HEK293T (cell line): ENCODE measurements at regions of chr6 and their contacts with region 1.

Region 1: GRCh38 chr6:64330694-64331307 is 695.2 kb downstream of the PHF3 start:
- DNase-seq: peak; percentile 21

Region 2: DNA sequence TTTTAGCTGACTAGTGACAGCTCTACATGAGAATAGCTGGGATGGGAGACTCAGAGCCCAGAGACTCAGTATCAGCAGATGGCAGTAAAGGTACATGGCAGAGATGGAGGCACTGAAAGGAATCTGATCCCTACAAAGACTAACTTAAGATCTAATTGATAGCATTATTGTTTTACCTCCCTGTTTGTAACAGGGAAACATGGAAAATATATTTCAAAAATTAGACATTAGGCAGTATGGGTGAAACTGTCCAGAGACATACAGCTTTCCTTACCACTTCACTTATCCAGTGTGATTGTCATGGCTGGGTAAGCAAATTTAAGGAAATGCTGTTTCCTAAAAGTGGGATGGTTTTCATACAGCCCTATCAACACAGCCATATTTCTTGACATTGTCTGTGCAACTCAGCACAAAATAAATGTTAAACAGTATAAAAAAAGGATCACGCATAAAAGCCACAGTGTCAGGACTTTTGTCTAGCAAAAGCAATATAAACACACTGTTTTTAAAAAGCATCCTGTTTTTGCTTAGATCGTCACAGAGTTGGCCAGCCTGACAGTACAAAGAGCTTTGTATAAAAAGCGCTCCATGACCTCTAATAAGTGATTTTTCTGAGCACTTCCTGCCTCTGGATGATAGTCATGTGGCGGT is 318.3 kb before region 1 on chr6:
- CTCF ChIA-PET with region 1: interaction called, 29 read pairs
- POLR2A ChIA-PET with region 1: interaction called, 3 read pairs
- DNase-seq: peak; percentile 57

Region 3: GRCh38 chr6:64301307-64302236 is 29.2 kb before region 1 on chr6:
- CTCF ChIA-PET with region 1: no interaction called
- POLR2A ChIA-PET with region 1: no interaction called
- DNase-seq: no peak

Region 4: DNA sequence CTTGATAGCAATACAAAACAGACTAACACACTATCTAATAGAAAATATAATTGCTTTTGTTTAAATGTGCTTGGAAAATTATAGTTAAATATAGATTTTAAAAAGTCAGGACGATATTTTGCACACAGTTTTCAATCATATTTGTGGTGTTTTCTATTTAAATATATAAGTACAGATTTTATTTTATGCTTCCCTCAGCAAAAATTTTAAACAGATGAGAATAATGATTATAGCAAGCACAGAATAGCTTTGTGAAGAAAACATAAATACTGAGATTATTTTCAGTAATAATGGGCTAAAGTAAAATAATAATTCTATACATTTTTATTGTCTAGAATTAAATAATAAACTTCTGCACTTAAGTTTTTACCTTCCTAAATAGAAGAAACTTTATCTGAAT is 114.2 kb after region 1 on chr6:
- CTCF ChIA-PET with region 1: no interaction called
- POLR2A ChIA-PET with region 1: no interaction called
- DNase-seq: no peak